HepG2 (cell line): ENCODE measurements at regions of chr12 and their contacts with region 1.

Region 1: DNA sequence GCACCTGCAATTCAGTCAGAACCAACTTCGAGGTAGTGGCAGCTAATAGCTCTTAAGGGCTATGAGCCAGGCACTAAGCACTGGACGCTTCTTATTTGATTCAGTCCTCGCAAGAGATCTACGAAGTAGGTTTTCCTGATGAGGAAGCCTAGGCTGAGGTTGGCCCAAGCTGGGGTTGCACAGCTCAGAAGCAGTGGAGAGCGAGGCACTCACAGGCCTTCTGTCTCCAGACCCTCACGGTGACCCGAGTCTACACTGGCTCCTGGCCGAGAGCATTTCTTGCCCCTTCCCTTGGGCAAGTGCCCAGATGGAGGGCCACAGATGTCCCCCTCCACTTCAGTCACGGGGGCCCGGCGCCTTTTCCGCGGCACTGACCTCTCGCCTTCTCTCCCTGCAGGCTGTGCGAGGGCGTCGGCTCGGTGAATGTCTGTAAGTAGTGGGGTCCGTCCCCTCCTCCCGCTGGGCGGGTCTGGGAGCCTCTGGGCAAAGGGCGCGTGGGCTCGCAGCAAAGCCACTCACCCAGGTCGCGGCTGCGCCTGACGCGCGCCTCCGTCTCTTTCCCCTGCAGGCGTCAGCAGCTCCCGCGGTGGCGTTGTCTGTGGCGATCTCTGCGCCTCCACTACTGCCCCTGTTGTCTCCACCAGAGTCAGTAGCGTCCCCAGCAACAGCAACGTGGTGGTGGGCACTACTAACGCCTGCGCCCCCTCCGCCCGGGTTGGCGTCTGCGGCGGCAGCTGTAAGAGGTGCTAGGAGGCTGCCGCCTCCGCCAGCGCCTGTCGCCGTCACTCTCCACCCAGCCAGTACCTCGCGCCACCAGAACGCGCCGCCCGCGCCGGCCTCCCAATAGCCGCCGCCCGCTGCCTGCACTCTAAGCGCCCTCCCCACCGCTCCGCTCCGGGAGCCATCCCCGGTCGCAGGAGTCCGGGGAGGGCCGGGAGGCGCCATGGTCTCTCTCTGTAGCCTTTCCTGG is 13.1 kb downstream of the KRT83 start:
- DNase-seq: no peak
- ATAC-seq: peak; percentile 93
- H3K4me3 ChIP-seq: peak overlapping the region in 2 of 3 experiments; percentile 27 to 44; a peak in 2 of 6 replicates
- H3K27ac ChIP-seq: no peak overlapping the region
- H3K4me1 ChIP-seq: peaks cover 21% of the 10 kb centered on the region
- H3K27me3 ChIP-seq: peaks cover 0 to 36% of the 10 kb centered on the region in 2 experiments; a peak in 3 of 5 replicates
- CTCF ChIP-seq: no peak
- EP300 ChIP-seq: no peak
- POLR2A ChIP-seq: no peak
- RAD21 ChIP-seq: no peak

Region 2: GRCh38 chr12:52250048-52250990 is 57.8 kb before region 1 on chr12:
- CTCF ChIA-PET with region 1: no interaction called
- POLR2A ChIA-PET with region 1: no interaction called
- in situ Hi-C with region 1: no loop called
- intact Hi-C with region 1: loop called (anchors 5 kb)
- DNase-seq: no peak
- ATAC-seq: peak; percentile 25; the same call in 2 of the 3 replicates
- H3K4me3 ChIP-seq: no peak overlapping the region
- H3K27ac ChIP-seq: no peak overlapping the region
- H3K4me1 ChIP-seq: peaks cover 20% of the 10 kb centered on the region
- H3K27me3 ChIP-seq: peaks cover 5 to 54% of the 10 kb centered on the region in 2 experiments
- CTCF ChIP-seq: no peak
- EP300 ChIP-seq: no peak
- POLR2A ChIP-seq: no peak
- RAD21 ChIP-seq: no peak

Region 3: GRCh38 chr12:52319097-52319496 is 11.0 kb after region 1 on chr12:
- CTCF ChIA-PET with region 1: no interaction called
- POLR2A ChIA-PET with region 1: no interaction called
- in situ Hi-C with region 1: no loop called
- intact Hi-C with region 1: no loop called
- DNase-seq: no peak
- ATAC-seq: no peak
- H3K4me3 ChIP-seq: no peak overlapping the region
- H3K27ac ChIP-seq: no peak overlapping the region
- H3K4me1 ChIP-seq: no peaks in the 10 kb centered on the region
- H3K27me3 ChIP-seq: peaks cover 15 to 63% of the 10 kb centered on the region in 2 experiments; a peak in 4 of 5 replicates
- CTCF ChIP-seq: no peak
- EP300 ChIP-seq: no peak
- POLR2A ChIP-seq: no peak
- RAD21 ChIP-seq: no peak

Region 4: DNA sequence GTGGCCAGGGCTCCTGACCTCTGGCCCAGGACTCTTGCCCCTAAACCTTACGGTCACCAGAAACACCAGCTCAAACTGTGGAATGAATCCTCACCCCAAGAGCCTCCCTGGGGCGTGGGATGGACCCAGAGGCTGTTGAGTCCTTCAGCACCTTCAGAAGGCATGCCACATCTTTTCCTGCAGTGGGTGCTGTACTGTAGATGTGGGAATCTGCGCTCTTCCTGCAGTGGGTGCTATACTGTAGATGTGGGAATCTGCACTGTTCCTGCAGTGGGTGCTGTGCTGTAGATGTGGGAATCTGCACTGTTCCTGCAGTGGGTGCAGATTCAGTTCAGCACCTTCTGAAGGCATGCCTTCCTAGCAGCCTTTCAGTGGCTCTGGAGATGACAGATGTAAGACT is 96.8 kb after region 1 on chr12:
- CTCF ChIA-PET with region 1: no interaction called
- POLR2A ChIA-PET with region 1: no interaction called
- in situ Hi-C with region 1: no loop called
- intact Hi-C with region 1: no loop called
- DNase-seq: no peak
- ATAC-seq: peak; percentile 43; the same call in 2 of the 3 replicates
- H3K4me3 ChIP-seq: no peak overlapping the region
- H3K27ac ChIP-seq: no peak overlapping the region
- H3K4me1 ChIP-seq: no peaks in the 10 kb centered on the region
- H3K27me3 ChIP-seq: peaks cover 1 to 16% of the 10 kb centered on the region in 2 experiments; a peak in 3 of 5 replicates
- CTCF ChIP-seq: no peak
- EP300 ChIP-seq: no peak
- POLR2A ChIP-seq: no peak
- RAD21 ChIP-seq: no peak